Ovary (tissue), 10 donors: ENCODE measurements at regions of chr13 and their contacts with region 1.

Region 1: DNA sequence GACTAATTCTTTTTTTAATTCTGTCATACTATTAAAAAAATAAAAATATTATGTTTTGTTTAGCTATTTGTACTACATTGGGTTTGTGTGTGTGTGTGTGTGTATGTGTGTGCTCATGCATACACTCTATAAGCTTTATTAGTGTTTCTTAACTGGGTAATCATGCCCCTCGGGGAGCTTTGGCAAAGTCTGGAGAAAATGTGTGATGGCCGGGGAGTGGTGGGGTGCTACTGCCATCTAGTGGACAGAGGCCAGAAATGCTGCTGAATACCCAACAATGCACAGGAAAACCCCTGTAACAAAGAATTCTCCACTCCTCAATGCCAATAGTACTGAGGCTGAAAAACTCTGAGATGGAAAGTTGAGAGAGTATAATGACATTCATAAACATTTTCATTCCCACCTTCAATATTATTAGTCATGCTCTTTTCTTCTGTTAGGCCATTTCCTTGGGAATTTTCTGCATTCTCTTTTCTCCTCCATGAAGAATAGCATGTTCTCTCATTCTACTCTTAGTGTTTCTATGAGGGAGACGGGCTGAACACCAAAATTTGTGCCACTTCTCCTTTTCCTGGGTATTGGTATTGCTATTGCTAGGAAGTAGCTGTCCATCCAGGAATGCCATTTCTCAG is 157.3 kb downstream of the DNAJC3 start:
- DNase-seq: peak; percentile 42 to 74 (median 70)
- H3K4me3 ChIP-seq: no peak overlapping the region
- H3K27ac ChIP-seq: no peak overlapping the region
- H3K4me1 ChIP-seq: no peaks in the 10 kb centered on the region
- H3K27me3 ChIP-seq: no peaks in the 10 kb centered on the region
- CTCF ChIP-seq: peak; percentile 68 to 82 (median 79)
- EP300 ChIP-seq: no peak
- POLR2A ChIP-seq: no peak

Region 2: DNA sequence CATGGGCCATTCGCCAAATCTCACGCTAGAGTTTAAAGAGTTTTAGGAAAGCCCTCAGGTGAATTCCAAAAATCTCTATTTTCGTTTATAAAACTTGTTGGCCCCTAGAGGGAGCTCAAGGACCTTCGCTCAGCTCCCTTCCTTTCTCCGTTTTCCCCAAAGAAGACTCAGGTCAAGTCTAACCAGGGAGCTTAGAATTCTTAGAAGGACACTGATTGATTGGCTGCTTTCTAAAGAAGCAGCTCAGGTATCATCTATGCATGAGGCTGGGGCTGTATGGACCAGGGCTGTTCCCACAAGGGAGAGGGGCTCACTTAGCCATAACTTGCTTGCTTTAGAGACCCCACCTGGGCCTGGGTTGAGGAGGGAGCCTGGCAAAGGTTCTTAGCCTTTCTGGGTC is 210.2 kb before region 1 on chr13:
- intact Hi-C with region 1: loop called in 3 of 4 experiments (anchors 2 to 5 kb)
- DNase-seq: peak in 1 of 5 donors; percentile 38
- H3K4me3 ChIP-seq: no peak overlapping the region
- H3K27ac ChIP-seq: no peak overlapping the region
- H3K4me1 ChIP-seq: no peaks in the 10 kb centered on the region
- H3K27me3 ChIP-seq: no peaks in the 10 kb centered on the region
- CTCF ChIP-seq: peak; percentile 29 to 57 (median 54)
- EP300 ChIP-seq: no peak
- POLR2A ChIP-seq: no peak

Region 3: GRCh38 chr13:95636853-95637252 is 197.4 kb before region 1 on chr13:
- intact Hi-C with region 1: loop called in 1 of 4 experiments (anchors 10 kb)
- DNase-seq: no peak
- H3K4me3 ChIP-seq: no peak overlapping the region
- H3K27ac ChIP-seq: no peak overlapping the region
- H3K4me1 ChIP-seq: no peaks in the 10 kb centered on the region
- H3K27me3 ChIP-seq: no peaks in the 10 kb centered on the region
- CTCF ChIP-seq: no peak
- EP300 ChIP-seq: no peak
- POLR2A ChIP-seq: no peak